Common myeloid progenitor, CD34-positive (primary cell): ENCODE measurements at regions of chr10 and their contacts with region 1.

Region 1: DNA sequence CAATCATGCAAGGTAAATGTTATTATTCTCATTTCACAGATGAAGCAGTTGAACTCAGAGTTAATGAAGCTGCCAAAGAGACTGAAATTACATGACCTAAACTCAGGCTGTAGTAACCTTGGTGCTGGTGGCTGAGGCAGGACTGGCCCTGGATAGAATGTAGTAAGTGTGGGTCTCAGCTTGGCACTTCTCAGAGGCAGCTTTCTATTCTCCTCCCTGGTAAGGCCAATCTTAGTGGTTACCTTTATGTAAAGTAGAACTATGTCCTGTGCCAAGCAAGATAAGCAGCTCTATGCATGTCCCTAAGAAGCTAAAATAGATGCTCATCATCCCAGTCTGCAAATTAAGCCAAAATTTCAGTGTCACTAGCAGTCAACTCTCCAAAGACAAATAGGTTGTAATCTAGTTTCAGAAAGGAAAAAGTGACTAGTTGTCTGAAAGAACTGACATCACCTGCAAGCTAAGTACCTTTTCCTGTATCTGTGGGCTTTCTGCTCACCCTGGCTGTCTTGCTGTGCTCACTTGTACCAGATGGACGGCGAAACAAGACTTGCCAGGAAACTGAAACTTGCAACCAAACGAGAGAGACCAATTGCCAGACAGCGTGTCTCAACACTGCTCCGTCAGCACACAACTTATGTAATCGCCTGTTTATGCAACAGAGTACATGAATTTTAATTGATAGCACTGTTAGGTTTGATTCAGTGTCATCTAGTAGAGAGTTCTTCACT is 43.7 kb downstream of the CH25H start:
- DNase-seq: peak; percentile 17 to 77 (median 70)
- H3K4me3 ChIP-seq: peak overlapping the region in 6 of 7 experiments; percentile 9 to 74 (median 48)
- H3K27ac ChIP-seq: peak overlapping the region in 1 of 2 experiments; percentile 16
- H3K4me1 ChIP-seq: peaks cover 10 to 28% (median 17%) of the 10 kb centered on the region in 4 experiments
- H3K27me3 ChIP-seq: no peaks in the 10 kb centered on the region

Region 2: DNA sequence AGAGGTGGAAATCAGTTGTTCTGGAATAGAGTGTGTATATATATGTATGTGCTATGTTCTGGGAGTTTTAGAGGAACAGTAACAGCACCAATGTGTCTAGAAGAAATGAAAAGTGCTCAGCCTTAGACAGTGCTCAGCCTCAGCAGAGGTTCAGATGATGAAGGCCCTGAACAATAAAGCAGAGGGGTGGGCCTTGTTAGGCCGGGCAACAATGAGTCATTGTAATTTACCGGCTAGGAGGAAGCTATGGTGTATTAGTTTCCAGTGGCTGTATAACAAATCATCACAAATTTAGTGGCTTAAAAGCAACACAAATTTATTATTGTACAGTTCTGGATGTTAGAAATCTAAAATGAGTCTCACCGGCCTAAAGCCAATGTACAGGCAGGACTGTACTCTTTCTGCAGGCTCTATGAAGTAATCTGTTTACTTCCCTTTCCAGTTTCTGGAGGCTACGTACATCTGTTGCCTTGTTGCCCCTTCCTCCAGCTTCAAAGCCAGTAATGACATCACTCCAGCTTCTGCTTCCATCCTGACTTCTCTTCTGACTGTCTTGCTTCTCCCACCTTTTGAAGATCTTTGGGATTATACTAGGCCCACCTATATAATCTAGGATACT is 40.9 kb before region 1 on chr10:
- CTCF ChIA-PET with region 1: no interaction called
- POLR2A ChIA-PET with region 1: no interaction called
- DNase-seq: peak in 2 of 3 donors; percentile 34 to 50
- H3K4me3 ChIP-seq: no peak overlapping the region
- H3K27ac ChIP-seq: no peak overlapping the region
- H3K4me1 ChIP-seq: peaks cover 0 to 3% (median 0%) of the 10 kb centered on the region in 4 experiments
- H3K27me3 ChIP-seq: no peaks in the 10 kb centered on the region

Region 3: GRCh38 chr10:89134963-89135362 is 28.5 kb before region 1 on chr10:
- CTCF ChIA-PET with region 1: no interaction called
- POLR2A ChIA-PET with region 1: no interaction called
- DNase-seq: no peak
- H3K4me3 ChIP-seq: no peak overlapping the region
- H3K27ac ChIP-seq: no peak overlapping the region
- H3K4me1 ChIP-seq: peaks cover 0 to 3% (median 0%) of the 10 kb centered on the region in 4 experiments
- H3K27me3 ChIP-seq: no peaks in the 10 kb centered on the region

Region 4: GRCh38 chr10:89175816-89176215 is 12.4 kb after region 1 on chr10:
- CTCF ChIA-PET with region 1: interaction called, 10 read pairs
- POLR2A ChIA-PET with region 1: no interaction called
- DNase-seq: no peak
- H3K4me3 ChIP-seq: no peak overlapping the region
- H3K27ac ChIP-seq: no peak overlapping the region
- H3K4me1 ChIP-seq: peaks cover 0 to 4% (median 2%) of the 10 kb centered on the region in 4 experiments
- H3K27me3 ChIP-seq: no peaks in the 10 kb centered on the region

Region 5: GRCh38 chr10:89615824-89616223 is 452.4 kb after region 1 on chr10:
- CTCF ChIA-PET with region 1: no interaction called
- POLR2A ChIA-PET with region 1: no interaction called
- DNase-seq: peak; percentile 19 to 78 (median 42)
- H3K4me3 ChIP-seq: peak overlapping the region in 1 of 7 experiments; percentile 33
- H3K27ac ChIP-seq: no peak overlapping the region
- H3K4me1 ChIP-seq: peaks cover 0 to 24% (median 6%) of the 10 kb centered on the region in 4 experiments
- H3K27me3 ChIP-seq: no peaks in the 10 kb centered on the region